Sciatic nerve (tissue), 2 donors: ENCODE measurements at regions of chr6 and their contacts with region 1.

Region 1: DNA sequence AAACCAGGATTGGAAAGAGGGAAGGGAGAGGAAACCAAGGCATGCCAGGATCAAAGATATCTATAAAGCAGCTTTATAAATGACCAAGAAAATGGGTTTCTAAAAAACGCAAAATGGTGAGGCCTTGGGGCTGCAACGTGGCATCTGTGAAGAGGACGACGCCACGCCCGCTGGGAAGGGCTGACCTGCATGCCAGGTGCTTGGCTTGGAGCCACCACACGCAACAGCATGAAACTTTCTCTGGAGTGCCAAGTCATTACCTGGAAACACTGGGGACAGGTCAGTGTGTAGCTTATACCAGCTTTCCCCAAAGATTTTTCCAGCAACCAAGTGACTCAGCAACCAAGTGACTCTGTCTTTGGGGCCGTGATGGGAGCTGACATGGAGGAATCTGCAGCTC is 82.5 kb downstream of the POPDC3 start:
- DNase-seq: no peak
- ATAC-seq: no peak

Region 2: DNA sequence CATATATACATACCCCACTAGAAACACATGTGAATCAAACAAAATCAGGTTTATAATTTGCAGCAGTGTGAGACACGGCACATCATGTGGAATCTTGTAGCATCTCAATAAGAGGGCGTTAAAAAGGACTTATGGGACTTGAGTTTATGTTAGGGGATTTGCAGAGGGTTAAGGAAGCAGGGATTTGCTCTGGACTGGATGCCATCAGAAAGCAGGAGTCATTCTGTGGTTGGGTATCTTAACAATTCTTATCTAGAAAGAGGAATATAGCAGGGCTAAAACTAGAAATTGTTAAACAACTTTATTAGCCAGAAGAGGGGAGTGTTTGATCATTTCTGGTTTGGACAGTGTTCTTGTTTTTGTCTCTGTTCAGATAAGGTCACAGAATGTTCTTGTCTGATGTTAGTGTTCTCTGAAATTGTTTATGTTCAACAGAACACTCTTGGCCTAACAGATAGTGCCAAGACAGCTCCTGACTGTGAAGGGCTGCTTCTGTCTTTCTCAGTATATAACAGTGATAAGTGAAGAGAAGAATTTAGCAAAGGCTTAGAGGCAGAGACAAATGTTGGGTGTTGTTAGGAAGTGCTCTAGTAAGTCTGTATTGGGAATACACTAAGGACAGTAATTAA is 101.2 kb before region 1 on chr6:
- intact Hi-C with region 1: no loop called
- DNase-seq: no peak
- ATAC-seq: peak; percentile 77

Region 3: DNA sequence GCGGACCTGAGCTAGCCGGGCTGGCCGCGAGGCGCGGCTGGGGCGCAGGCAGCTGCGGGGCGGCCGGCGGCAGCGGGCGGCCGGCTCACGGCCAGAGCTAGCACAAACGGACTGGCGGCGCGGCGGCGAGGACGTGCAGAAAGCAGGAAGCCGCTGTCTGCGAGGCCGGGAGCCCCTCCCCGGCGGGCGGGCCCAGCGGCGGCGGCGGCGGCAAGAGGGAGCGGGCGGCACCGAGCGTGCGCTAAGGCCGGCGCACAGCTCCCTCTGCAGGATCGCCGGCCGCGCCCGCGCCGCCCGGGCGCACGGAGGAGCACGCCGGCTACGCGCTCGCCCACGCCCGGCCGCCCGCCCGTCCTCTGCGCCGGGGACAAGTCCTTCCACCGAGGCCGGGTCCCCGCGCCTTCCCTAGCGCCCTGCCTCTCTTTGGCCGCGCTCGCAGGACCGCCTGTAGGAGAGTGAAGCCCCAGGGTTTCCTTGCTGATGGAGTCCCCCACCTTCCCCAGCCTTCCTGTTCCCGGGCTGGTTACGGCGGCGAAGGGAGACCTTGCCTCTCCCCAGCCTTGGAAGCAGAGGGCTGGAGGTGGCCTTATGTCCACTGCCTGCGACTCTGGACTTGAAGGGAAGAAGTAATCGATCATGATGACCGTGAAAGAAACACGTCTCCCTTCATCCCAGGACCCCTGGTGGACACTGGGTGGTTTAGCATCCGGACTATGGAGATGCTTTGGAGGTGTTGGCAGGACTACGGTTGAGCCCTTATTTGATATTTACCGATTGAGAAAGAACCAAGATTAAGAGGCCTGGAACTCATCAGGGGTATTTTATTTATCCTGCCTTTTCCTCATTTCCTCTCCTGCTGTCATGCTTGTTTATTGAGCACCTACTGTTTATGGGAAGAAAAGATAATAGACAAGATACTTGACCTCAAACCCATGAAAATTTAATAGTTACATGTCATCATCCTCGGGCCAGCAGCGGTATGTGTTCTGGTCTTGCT is 305.9 kb after region 1 on chr6 and contains the start of gene PREP:
- intact Hi-C with region 1: loop called (anchors 10 kb)
- DNase-seq: peak; percentile 91
- ATAC-seq: peak; percentile 93
- total RNA-seq, gene PREP: 19.8 TPM